ENCODE measurements at regions of chr13 and their contacts with region 1.

Region 1: GRCh38 chr13:28718543-28719226 is at the start of gene SLC46A3:
- DNase-seq: peak; percentile 99
- H3K4me3 ChIP-seq: peak within 1 kb of the TSS; percentile 75
- H3K4me3 Mint-ChIP-seq: peak within 1 kb of the TSS; percentile 96
- H3K27ac Mint-ChIP-seq: peak within 1 kb of the TSS; percentile 83
- H3K4me1 ChIP-seq: peaks cover 4% of the 10 kb centered on the region; the same call in 1 of the 2 replicates
- H3K4me1 Mint-ChIP-seq: peaks cover 14% of the 10 kb centered on the region
- H3K27me3 ChIP-seq: no peaks in the 10 kb centered on the region
- H3K27me3 Mint-ChIP-seq: no peaks in the 10 kb centered on the region
- CTCF ChIP-seq: no peak
- total RNA-seq, gene SLC46A3: 2.0 and 2.3 TPM in 2 replicates

Region 2: GRCh38 chr13:28173793-28174192 is 544.9 kb before region 1 on chr13:
- CTCF ChIA-PET with region 1: no interaction called
- POLR2A ChIA-PET with region 1: no interaction called
- intact Hi-C with region 1: no loop called
- DNase-seq: no peak
- H3K4me3 ChIP-seq: no peak overlapping the region
- H3K4me3 Mint-ChIP-seq: no peak overlapping the region
- H3K27ac Mint-ChIP-seq: no peak overlapping the region
- H3K4me1 ChIP-seq: no peaks in the 10 kb centered on the region
- H3K4me1 Mint-ChIP-seq: peaks cover 18% of the 10 kb centered on the region
- H3K27me3 ChIP-seq: no peaks in the 10 kb centered on the region
- H3K27me3 Mint-ChIP-seq: no peaks in the 10 kb centered on the region
- CTCF ChIP-seq: no peak

Region 3: GRCh38 chr13:28679628-28680027 is 39.1 kb before region 1 on chr13:
- CTCF ChIA-PET with region 1: interaction called, 3 read pairs
- POLR2A ChIA-PET with region 1: no interaction called
- intact Hi-C with region 1: loop called (anchors 5 kb)
- DNase-seq: no peak
- H3K4me3 ChIP-seq: no peak overlapping the region
- H3K4me3 Mint-ChIP-seq: no peak overlapping the region
- H3K27ac Mint-ChIP-seq: no peak overlapping the region
- H3K4me1 ChIP-seq: no peaks in the 10 kb centered on the region
- H3K4me1 Mint-ChIP-seq: no peaks in the 10 kb centered on the region
- H3K27me3 ChIP-seq: no peaks in the 10 kb centered on the region
- H3K27me3 Mint-ChIP-seq: no peaks in the 10 kb centered on the region
- CTCF ChIP-seq: peak; percentile 40 to 50

Region 4: GRCh38 chr13:28697441-28697840 is 21.2 kb before region 1 on chr13:
- CTCF ChIA-PET with region 1: interaction called, 5 read pairs
- POLR2A ChIA-PET with region 1: interaction called, 3 read pairs
- intact Hi-C with region 1: loop called (anchors 2 kb)
- DNase-seq: no peak
- H3K4me3 ChIP-seq: no peak overlapping the region
- H3K4me3 Mint-ChIP-seq: no peak overlapping the region
- H3K27ac Mint-ChIP-seq: no peak overlapping the region
- H3K4me1 ChIP-seq: peaks cover 11% of the 10 kb centered on the region
- H3K4me1 Mint-ChIP-seq: no peaks in the 10 kb centered on the region
- H3K27me3 ChIP-seq: no peaks in the 10 kb centered on the region
- H3K27me3 Mint-ChIP-seq: no peaks in the 10 kb centered on the region
- CTCF ChIP-seq: no peak